Colonic mucosa (tissue), 4 donors: ENCODE measurements at regions of chr18 and their contacts with region 1.

Region 1: GRCh38 chr18:35143622-35144596 is 96.9 kb upstream of the ZNF397 start:
- DNase-seq: peak; percentile 64
- H3K4me3 ChIP-seq: no peak overlapping the region
- H3K27ac ChIP-seq: no peak overlapping the region
- H3K4me1 ChIP-seq: no peaks in the 10 kb centered on the region
- H3K27me3 ChIP-seq: no peaks in the 10 kb centered on the region
- CTCF ChIP-seq: peak; percentile 60

Region 2: DNA sequence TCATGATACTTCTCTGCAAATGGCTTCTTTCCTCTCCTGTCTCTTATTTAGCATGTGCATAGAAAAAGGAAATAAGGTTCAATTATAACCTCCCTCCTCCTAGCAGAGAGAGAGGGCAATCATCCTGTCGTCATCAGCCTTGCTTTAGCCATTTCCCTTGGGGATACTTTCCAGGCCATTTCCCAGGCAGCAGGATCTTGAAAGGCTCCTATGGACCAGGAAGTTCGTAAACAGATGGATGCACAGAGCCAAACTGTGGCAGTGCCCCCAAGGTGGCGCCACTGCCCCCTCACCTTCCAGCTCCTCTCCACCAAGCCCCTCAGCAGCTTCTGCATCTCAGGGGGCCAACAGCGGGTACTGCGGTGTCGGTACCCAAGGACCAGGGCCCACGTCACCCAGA is 276.4 kb before region 1 on chr18:
- intact Hi-C with region 1: loop called (anchors 5 kb)
- DNase-seq: no peak
- H3K4me3 ChIP-seq: no peak overlapping the region
- H3K27ac ChIP-seq: no peak overlapping the region
- H3K4me1 ChIP-seq: no peaks in the 10 kb centered on the region
- H3K27me3 ChIP-seq: no peaks in the 10 kb centered on the region
- CTCF ChIP-seq: no peak

Region 3: GRCh38 chr18:34942975-34943374 is 200.9 kb before region 1 on chr18:
- intact Hi-C with region 1: loop called (anchors 5 kb)
- DNase-seq: peak; percentile 48
- H3K4me3 ChIP-seq: no peak overlapping the region
- H3K27ac ChIP-seq: no peak overlapping the region
- H3K4me1 ChIP-seq: no peaks in the 10 kb centered on the region
- H3K27me3 ChIP-seq: no peaks in the 10 kb centered on the region
- CTCF ChIP-seq: no peak

Region 4: GRCh38 chr18:35005963-35006577 is 137.8 kb before region 1 on chr18:
- intact Hi-C with region 1: loop called (anchors 2 kb)
- DNase-seq: no peak
- H3K4me3 ChIP-seq: no peak overlapping the region
- H3K27ac ChIP-seq: no peak overlapping the region
- H3K4me1 ChIP-seq: no peaks in the 10 kb centered on the region
- H3K27me3 ChIP-seq: no peaks in the 10 kb centered on the region
- CTCF ChIP-seq: peak; percentile 53